Transverse colon (tissue), 4 donors: ENCODE measurements at regions of chr1 and their contacts with region 1.

Region 1: GRCh38 chr1:43648221-43648847 is 1.6 kb upstream of the KDM4A start:
- DNase-seq: no peak
- H3K4me3 ChIP-seq: no peak overlapping the region
- H3K27ac ChIP-seq: peak overlapping the region in 3 of 4 donors; percentile 93 to 94 (median 94)
- H3K4me1 ChIP-seq: peaks cover 15 to 33% (median 18%) of the 10 kb centered on the region in 4 donors
- H3K27me3 ChIP-seq: no peaks in the 10 kb centered on the region
- CTCF ChIP-seq: no peak
- EP300 ChIP-seq: no peak
- POLR2A ChIP-seq: no peak

Region 2: GRCh38 chr1:43435146-43436145 is 212.9 kb before region 1 on chr1:
- in situ Hi-C with region 1: loop called in 1 of 4 experiments (anchors 25 kb)
- intact Hi-C with region 1: no loop called
- DNase-seq: no peak
- H3K4me3 ChIP-seq: no peak overlapping the region
- H3K27ac ChIP-seq: peak overlapping the region; percentile 11 to 70 (median 34)
- H3K4me1 ChIP-seq: peaks cover 0 to 3% (median 0%) of the 10 kb centered on the region in 4 donors
- H3K27me3 ChIP-seq: no peaks in the 10 kb centered on the region
- CTCF ChIP-seq: no peak
- EP300 ChIP-seq: no peak
- POLR2A ChIP-seq: no peak

Region 3: DNA sequence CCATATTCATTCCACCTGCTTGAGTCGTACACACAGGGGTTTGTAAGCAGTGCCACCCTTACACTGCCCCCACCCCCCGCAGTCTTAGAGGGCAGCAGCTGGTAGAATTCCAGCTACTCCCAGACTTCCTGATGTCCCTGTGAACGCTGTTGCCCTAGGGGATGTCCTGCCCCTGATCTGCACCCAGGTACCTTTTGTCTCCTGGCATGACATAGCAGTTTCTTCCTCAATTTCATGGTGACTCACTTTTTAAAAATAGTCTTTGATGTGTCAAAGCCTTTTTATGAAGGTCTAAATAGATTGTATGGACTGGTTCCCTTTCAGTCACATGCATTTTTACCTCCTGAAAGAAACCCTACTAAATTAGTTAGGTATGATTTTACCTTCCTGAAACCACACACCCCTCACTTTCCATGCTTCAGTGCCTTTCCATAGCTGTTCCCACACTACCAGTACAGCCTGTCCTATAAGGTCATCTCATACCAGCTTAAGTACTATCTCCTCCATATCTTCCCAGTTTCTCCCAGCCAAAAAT is 135.4 kb after region 1 on chr1:
- in situ Hi-C with region 1: no loop called
- intact Hi-C with region 1: no loop called
- DNase-seq: no peak
- H3K4me3 ChIP-seq: no peak overlapping the region
- H3K27ac ChIP-seq: no peak overlapping the region
- H3K4me1 ChIP-seq: peaks cover 0 to 36% (median 13%) of the 10 kb centered on the region in 4 donors
- H3K27me3 ChIP-seq: no peaks in the 10 kb centered on the region
- CTCF ChIP-seq: no peak
- EP300 ChIP-seq: no peak
- POLR2A ChIP-seq: no peak